Activated CD4-positive, alpha-beta memory T cell treated with anti-CD3 and anti-CD28 coated beads, Interleukin-2, amount 10 ng/mL, durations not matched to agents 7 days and 5 days (primary cell): ENCODE measurements at regions of chr15 and their contacts with region 1.

Region 1: GRCh38 chr15:34331809-34332208 is 5.8 kb downstream of the SLC12A6 start:
- DNase-seq: no peak
- H3K4me3 Mint-ChIP-seq: peak overlapping the region; percentile 0
- H3K27ac Mint-ChIP-seq: peak overlapping the region; percentile 75
- H3K4me1 Mint-ChIP-seq: peaks cover 83% of the 10 kb centered on the region
- H3K27me3 Mint-ChIP-seq: no peaks in the 10 kb centered on the region

Region 2: DNA sequence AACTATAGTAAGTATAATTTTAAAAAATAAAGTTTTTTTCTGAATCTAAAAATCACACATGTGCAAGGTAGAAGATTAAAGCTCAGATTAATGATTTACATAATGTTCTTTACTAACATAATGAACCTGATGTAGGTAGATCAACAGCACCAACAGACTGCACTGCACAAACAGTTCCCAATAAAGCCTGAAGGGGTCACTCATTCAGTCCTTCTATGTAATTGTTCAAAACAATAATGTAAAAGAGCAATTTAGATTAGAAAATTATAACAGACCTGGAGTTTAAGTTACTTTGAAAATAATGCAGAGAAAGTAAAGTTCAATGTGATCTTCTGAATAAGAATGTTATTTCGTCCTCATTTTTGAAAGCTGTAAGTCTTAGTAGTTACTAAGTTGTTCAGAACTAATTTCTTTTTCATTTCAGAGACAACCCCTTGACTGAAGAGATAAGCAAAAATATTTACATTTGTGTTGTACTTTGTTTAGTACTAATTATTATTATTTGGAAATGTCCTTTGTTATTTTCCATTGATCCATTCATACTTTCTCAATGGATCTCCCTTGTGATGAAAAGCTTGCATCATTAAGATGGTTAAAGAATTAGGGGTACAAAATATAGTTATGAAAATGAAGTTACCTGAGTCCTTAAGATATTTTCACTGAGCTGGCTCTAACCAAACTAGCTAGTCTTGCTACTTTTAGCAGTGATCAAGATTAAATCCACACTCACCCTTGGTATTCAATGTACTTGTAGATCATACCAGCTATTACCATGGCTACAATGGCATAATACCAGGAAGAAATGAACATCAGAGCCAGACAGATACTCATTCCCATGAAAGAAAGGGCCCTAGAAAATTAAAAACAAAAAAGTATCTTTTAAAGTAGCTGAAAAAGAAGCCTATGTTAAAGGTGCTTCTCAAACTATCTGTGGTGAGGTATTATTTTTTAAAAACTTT is 90.2 kb before region 1 on chr15:
- CTCF ChIA-PET with region 1: interaction called, 21 read pairs
- POLR2A ChIA-PET with region 1: no interaction called
- DNase-seq: peak; percentile 26
- H3K4me3 Mint-ChIP-seq: no peak overlapping the region
- H3K27ac Mint-ChIP-seq: no peak overlapping the region
- H3K4me1 Mint-ChIP-seq: peaks cover 29% of the 10 kb centered on the region
- H3K27me3 Mint-ChIP-seq: no peaks in the 10 kb centered on the region

Region 3: GRCh38 chr15:34318277-34319079 is 13.3 kb before region 1 on chr15:
- CTCF ChIA-PET with region 1: interaction called, 16 read pairs
- POLR2A ChIA-PET with region 1: interaction called, 79 read pairs
- DNase-seq: no peak
- H3K4me3 Mint-ChIP-seq: peak overlapping the region; percentile 81
- H3K27ac Mint-ChIP-seq: peak overlapping the region; percentile 60
- H3K4me1 Mint-ChIP-seq: peaks cover 26% of the 10 kb centered on the region
- H3K27me3 Mint-ChIP-seq: no peaks in the 10 kb centered on the region

Region 4: DNA sequence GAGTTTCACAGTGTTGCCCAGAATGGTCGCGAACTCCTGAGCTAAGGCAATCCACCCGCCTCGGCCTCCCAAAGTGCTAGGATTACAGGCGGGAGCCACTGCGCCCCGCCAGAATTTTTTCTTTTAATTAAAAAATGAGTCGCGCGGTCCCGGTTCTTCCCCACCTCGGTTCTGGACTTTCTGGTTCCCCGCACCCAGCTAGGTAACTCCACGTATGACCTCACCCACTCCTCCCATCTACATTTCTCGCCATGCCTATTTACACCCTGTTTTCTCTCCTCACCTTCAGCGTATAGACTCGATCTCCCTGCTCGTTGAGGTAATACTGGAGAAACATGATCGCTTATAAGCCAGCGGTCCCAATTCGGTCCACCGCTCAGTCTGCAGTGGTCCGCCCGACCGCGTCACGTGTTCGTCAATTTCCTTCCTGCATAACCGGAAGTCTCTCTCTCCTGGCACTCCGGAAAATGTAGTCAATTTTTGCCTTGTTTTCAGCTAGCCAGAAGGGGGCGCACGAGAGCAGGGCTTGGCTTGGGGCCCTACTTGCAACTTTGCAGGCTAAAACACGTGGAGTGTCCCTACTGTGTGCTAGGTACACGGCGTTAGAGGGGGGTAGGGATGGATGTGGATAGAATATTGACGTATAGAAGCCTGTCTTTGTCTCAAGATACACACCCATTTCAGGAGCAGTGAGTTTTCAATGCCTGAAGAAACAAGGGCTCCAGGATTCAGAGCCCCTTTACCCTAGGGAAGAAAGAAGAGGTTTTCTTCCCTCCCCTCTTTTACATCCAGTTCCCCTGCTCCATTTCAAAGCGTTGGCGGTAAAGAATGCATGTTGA is 11.1 kb after region 1 on chr15 and contains the starts of genes NOP10 and NUTM1:
- CTCF ChIA-PET with region 1: interaction called, 22 read pairs
- POLR2A ChIA-PET with region 1: interaction called, 79 read pairs
- DNase-seq: peak; percentile 95
- H3K4me3 Mint-ChIP-seq: no peak within 1 kb of the TSS
- H3K27ac Mint-ChIP-seq: peak within 1 kb of the TSS; percentile 74
- H3K4me1 Mint-ChIP-seq: peaks cover 26% of the 10 kb centered on the region
- H3K27me3 Mint-ChIP-seq: no peaks in the 10 kb centered on the region
- total RNA-seq, gene NOP10: 170 to 183 TPM
- total RNA-seq, gene NUTM1: not detected